Transverse colon (tissue), 4 donors: ENCODE measurements at regions of chr1 and their contacts with region 1.

Region 1: DNA sequence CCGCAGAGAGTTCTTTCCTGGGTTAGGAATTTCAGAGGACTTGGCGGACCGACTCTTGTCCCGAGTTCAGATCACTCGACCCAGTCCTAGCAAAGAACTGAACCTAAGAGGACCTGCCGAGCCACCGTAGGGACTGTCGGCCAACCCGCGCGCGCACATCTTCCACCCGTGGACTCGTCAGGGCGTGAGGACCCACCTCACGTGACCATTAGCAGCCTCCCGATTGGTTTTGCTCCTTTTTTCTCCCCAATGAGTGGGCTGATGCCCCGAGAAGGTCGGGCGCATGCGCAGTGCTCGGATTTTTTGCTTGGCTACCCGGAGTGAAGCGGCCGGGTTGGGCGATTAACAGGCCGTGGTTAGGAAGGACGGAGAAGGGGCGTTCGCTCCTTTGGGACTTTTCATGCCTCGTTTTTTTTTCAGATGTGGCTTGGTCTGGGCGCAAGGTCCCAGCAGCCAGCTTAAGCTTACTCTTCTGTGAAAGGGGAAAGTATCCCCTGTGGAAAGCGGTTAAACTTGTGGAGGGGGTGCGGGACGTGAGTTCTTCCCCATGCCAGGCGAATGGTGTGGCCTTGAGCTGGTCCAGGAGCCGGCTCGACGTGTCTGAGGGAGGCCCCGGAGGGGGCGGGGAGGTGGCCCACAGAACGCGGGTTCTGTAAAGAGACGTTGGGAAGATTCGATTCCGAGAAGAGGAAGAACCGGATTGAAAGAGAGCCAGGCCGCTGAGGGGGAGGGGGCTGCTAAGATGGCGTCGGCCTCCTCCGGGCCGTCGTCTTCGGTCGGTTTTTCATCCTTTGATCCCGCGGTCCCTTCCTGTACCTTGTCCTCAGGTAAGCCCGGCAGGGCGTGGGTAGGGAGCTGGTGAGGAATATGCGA is at the start of gene PIP5K1A:
- DNase-seq: peak; percentile 98
- H3K4me3 ChIP-seq: peak within 1 kb of the TSS; percentile 75 to 93 (median 78)
- H3K27ac ChIP-seq: peak within 1 kb of the TSS; percentile 95 to 99 (median 96)
- H3K4me1 ChIP-seq: peaks cover 12 to 54% (median 39%) of the 10 kb centered on the region in 4 donors
- H3K27me3 ChIP-seq: no peaks in the 10 kb centered on the region
- CTCF ChIP-seq: no peak
- EP300 ChIP-seq: no peak
- POLR2A ChIP-seq: peak; percentile 92
- total RNA-seq, gene PIP5K1A: 46.7 to 78.2 (median 59.4) TPM

Region 2: DNA sequence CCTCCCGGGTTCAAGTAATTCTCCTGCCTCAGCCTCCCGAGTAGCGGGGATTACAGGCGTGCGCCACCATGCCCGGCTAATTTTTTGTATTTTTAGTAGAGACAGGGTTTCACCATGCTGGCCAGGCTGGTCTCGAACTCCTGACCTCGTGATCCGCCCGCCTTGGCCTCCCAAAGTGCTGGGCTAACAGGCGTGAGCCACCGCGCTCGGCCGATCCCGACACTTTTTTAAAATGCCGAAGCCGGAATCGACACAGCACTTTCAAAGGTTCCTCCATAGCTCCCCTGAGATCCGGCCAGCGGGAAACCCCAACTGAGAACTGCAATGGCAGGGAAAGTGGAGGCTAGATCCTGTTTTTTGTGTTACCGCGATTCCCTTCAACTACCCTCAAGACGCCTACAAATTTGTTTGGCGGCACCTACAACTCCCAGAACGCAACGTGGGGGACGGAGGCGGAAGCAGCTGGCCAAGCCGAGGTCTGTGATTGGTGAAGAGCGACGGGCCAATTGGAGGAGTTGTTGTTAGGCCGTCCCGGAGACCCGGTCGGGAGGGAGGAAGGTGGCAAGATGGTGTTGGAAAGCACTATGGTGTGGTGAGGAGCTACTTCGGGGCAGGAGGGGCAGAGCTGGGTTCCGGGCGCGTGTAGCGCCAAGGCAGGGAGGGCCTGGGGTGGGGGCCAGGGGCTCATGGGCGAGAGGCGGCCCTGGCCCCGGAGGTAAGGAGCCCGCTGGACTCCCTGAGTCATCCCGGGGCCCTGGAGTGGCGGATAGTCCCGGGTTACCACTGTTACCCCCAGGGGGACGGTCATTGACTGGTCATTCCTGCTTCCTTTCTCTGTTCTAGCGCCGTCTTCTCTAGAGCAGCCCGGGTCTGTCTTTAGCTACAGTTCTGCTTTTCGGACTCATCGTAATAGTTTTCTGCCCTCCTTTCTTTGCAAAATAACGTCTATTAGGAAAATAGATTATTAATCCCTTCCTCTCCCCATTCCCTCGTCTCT is 56.0 kb after region 1 on chr1 and contains the start of gene PSMD4:
- in situ Hi-C with region 1: no loop called
- intact Hi-C with region 1: loop called (anchors 5 kb)
- DNase-seq: peak; percentile 95
- H3K4me3 ChIP-seq: peak within 1 kb of the TSS; percentile 90 to 92 (median 92)
- H3K27ac ChIP-seq: peak within 1 kb of the TSS; percentile 88 to 90 (median 88)
- H3K4me1 ChIP-seq: peaks cover 6 to 14% (median 10%) of the 10 kb centered on the region in 4 donors
- H3K27me3 ChIP-seq: no peaks in the 10 kb centered on the region
- CTCF ChIP-seq: peak in 1 of 5 experiments; percentile 17
- EP300 ChIP-seq: no peak
- POLR2A ChIP-seq: peak; percentile 86
- total RNA-seq, gene PSMD4: 41.9 to 111 (median 79.5) TPM

Region 3: DNA sequence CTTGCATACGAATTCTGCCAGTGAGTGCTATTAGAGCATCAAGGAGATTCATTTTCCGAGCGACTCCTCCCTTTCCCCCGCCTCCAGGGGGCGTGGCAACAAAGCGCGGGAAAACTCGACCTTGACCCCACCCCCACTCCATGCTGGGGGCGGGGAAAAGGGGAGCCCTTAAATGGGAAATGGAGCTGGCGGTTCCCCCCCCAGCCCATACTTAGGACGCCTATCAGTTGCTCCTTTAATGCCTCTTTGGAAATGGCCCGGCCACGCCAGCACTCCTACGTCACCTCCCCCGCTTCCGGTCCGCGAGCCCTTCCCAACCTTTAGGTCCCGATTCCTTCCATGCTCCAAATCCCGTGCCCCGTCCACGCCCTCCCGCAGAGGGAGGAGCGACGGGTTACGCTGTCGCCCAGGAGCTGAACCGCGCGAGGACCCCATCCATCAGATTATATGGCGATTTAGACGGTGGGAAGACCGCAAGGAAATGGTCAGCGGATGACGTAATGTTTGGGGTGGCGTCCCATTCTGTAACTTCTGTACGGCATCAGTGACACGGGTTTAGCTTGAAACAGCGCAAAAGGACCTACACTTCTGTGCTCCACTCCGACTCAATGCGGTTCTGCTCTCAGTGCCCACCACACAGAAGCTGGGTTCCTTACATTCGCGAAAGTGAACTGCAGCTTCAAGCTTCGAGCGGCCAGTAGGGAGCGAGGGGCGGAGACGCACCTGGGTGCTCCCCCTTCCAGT is 82.9 kb after region 1 on chr1:
- in situ Hi-C with region 1: no loop called
- intact Hi-C with region 1: no loop called
- DNase-seq: peak; percentile 97
- H3K4me3 ChIP-seq: peak overlapping the region; percentile 63 to 92 (median 68)
- H3K27ac ChIP-seq: peak overlapping the region; percentile 94 to 98 (median 98)
- H3K4me1 ChIP-seq: peaks cover 5 to 21% (median 20%) of the 10 kb centered on the region in 4 donors
- H3K27me3 ChIP-seq: no peaks in the 10 kb centered on the region
- CTCF ChIP-seq: peak in 4 of 5 experiments; percentile 18 to 49 (median 32)
- EP300 ChIP-seq: peak; percentile 33
- POLR2A ChIP-seq: peak; percentile 73

Region 4: GRCh38 chr1:151520359-151520758 is 321.9 kb after region 1 on chr1:
- in situ Hi-C with region 1: no loop called
- intact Hi-C with region 1: no loop called
- DNase-seq: no peak
- H3K4me3 ChIP-seq: no peak overlapping the region
- H3K27ac ChIP-seq: no peak overlapping the region
- H3K4me1 ChIP-seq: peaks cover 0 to 11% (median under 1%) of the 10 kb centered on the region in 4 donors
- H3K27me3 ChIP-seq: no peaks in the 10 kb centered on the region
- CTCF ChIP-seq: no peak
- EP300 ChIP-seq: no peak
- POLR2A ChIP-seq: no peak